ENCODE measurements at regions of chr4 and their contacts with region 1.

Region 1: DNA sequence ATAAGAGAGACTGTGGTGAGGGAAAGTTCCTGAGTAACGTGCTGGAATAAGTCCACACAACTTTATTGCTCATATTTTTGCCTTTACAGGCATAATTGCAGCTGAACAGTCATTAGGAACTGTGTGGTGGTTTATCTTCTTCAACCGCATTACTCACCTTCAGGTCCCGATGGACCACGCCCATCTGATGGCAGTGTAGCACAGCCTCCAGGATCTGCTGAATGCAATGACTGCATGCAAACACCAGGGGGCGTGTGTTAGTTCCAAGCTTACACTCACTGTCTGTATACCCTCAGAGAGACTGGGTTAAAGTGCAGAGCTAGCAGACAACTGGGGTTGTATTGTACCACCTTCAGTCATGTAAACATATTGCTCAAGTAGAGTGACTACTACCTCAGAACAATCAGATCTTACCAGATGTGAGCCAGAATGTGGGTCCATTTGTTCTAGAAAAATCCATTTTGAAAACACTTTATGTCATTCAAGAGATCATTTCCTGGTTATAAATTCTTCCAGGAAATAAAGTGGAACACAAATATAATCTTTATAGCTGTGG is 214.0 kb downstream of the CAMK2D start:
- DNase-seq: peak; percentile 51 to 96 (median 80)

Region 2: GRCh38 chr4:113300471-113300928 is 247.1 kb before region 1 on chr4:
- intact Hi-C with region 1: no loop called
- DNase-seq: no peak

Region 3: DNA sequence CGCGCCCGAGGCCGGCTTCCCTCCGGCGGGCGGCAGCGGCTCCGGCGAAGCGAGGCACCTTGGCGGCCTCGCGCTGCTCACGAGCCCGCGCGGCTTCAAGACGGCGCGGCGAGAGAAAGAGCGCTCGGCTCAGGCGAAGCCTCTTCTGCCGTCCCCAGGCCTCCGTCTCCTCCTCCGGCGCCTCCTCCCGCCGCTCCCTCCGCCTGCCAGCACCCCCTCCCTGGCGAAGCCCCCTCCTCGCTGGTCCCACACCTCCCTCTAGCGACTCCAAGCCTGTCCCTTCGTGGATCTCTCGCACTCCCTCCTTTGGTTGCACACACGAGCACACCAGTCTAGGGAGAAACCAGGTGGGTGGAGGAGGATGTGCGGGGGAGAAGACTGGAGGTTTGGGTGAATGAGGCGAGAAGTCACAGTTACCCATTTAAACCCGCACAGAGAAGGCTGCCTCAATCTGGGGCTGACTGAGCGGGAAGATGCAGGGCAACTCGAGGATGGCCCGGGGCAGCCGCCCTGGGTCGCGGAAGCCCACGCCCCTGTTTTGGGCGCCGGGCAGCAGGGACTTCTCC is 214.1 kb after region 1 on chr4 and contains the start of gene CAMK2D:
- intact Hi-C with region 1: loop called (anchors 1 kb)
- DNase-seq: peak; percentile 83 to 98 (median 88)

Region 4: DNA sequence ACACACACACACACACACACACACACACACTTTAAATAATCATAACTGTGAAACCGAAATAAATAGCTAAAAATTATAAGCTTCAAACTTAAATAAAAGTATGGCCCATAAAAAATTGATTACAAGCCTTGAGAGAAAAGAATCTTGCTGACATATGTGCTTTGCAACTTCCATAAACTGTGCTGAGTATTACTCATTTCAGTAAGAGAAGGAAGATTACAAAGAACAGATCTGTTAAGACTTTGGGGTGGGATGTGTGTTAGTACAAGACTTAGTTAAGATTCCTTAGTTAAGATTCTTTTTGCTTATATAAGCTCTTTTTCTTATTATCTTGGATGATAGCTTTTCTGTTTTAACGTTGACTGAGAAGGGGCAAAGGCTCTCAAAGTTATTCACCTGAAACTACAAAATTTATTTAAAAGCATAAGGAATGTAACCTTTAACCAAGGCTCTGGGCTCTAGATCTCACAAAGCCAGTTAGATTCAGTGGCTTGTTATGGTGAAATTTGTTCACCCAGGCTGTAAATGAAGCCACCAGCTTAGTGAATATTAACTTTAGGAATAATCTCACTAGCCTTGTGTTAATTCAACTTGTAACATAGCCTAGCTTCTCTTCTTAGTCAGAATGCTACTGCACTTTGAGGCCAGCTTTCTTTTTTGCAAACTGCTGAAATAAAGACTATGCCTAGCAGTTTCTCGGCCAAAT is 373.7 kb after region 1 on chr4:
- intact Hi-C with region 1: no loop called
- DNase-seq: no peak

Measured in posterior cingulate gyrus (tissue), 11 donors.